H1 (cell line): ENCODE measurements at regions of chr2 and their contacts with region 1.

Region 1: GRCh38 chr2:164620873-164621626 is at the start of gene GRB14:
- DNase-seq: peak; percentile 62 to 84
- H3K4me3 ChIP-seq: peak within 1 kb of the TSS; percentile 52 to 85 (median 72)
- H3K27ac ChIP-seq: peak within 1 kb of the TSS; percentile 73; the same call in 1 of the 2 replicates
- H3K4me1 ChIP-seq: peaks cover 5 to 14% (median 11%) of the 10 kb centered on the region in 4 experiments; a peak in 6 of 7 replicates
- H3K27me3 ChIP-seq: no peaks in the 10 kb centered on the region; a peak in 1 of 7 replicates
- CTCF ChIP-seq: no peak
- EP300 ChIP-seq: no peak
- POLR2A ChIP-seq: peak; percentile 68 to 83
- RAD21 ChIP-seq: no peak
- total RNA-seq, gene GRB14: 11.6 and 13.5 TPM in 2 replicates

Region 2: DNA sequence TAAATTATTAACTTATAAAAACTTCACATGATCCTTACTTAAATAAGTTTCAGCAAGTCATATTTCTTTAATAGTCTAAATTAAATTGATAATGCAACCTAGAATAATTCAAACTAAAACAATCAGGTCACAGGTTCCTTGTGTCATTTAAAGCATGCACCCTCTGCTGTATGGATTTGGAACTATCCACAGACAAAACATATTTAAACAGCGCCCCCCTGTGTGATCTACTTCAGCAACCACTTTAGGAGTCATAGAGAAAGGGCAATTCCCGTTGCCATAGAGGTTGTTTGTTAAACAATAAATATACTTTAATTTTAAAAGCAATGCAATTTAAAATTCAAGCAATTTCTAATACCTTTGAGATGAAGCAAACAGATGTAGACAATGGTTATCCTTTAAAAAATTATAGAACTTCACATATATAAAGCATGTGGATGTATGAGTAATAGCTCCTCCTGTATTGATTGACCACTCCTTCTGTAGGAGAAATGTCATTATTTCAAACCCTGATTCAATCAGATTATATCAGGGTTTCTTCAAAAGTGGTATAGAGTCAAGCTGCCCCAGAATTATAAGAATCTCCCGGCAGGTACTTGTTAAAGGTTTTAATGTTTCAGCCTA is 21.0 kb before region 1 on chr2:
- CTCF ChIA-PET with region 1: interaction called, 11 read pairs
- POLR2A ChIA-PET with region 1: interaction called, 3 read pairs
- DNase-seq: peak in 1 of 2 experiments; percentile 52
- H3K4me3 ChIP-seq: no peak overlapping the region
- H3K27ac ChIP-seq: no peak overlapping the region
- H3K4me1 ChIP-seq: no peaks in the 10 kb centered on the region
- H3K27me3 ChIP-seq: no peaks in the 10 kb centered on the region
- CTCF ChIP-seq: peak in 2 of 3 experiments; percentile 79 to 99; a peak in 3 of 4 replicates
- EP300 ChIP-seq: no peak
- POLR2A ChIP-seq: no peak
- RAD21 ChIP-seq: peak; percentile 66 to 69

Region 3: GRCh38 chr2:164771897-164772296 is 150.8 kb after region 1 on chr2:
- CTCF ChIA-PET with region 1: no interaction called
- POLR2A ChIA-PET with region 1: no interaction called
- DNase-seq: no peak
- H3K4me3 ChIP-seq: no peak overlapping the region
- H3K27ac ChIP-seq: no peak overlapping the region
- H3K4me1 ChIP-seq: no peaks in the 10 kb centered on the region
- H3K27me3 ChIP-seq: no peaks in the 10 kb centered on the region
- CTCF ChIP-seq: no peak
- EP300 ChIP-seq: no peak
- POLR2A ChIP-seq: no peak
- RAD21 ChIP-seq: no peak

Region 4: DNA sequence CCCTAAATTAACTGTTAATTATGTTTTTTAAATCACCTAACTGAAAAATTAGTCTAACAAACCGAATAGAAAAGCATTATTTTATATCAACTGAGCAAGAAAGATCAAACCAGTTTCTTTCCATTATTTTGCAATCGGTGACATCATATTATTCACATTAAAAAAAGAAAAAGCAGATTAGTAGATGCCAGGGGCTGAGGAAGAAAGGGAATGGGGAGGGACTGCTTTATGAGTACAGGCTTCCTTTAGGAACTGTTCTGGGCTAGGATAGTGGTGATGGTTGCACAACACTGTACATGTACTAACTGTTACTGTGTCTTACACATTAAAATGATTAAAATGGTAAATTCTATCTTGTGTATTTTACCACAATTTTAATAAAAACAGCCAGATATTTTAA is 161.3 kb after region 1 on chr2:
- CTCF ChIA-PET with region 1: no interaction called
- POLR2A ChIA-PET with region 1: no interaction called
- DNase-seq: no peak
- H3K4me3 ChIP-seq: no peak overlapping the region
- H3K27ac ChIP-seq: no peak overlapping the region
- H3K4me1 ChIP-seq: 0 out of 7 replicates have a peak, but pooled peaks cover 0 to 2% (median 0%) of the 10 kb centered on the region in 4 experiments
- H3K27me3 ChIP-seq: no peaks in the 10 kb centered on the region
- CTCF ChIP-seq: no peak
- EP300 ChIP-seq: no peak
- POLR2A ChIP-seq: no peak
- RAD21 ChIP-seq: no peak